ENCODE measurements at regions of chr18 and their contacts with region 1.

Region 1: GRCh38 chr18:47737956-47738355 is 192.5 kb downstream of the SMAD2 start:
- DNase-seq: no peak
- H3K4me3 ChIP-seq: no peak overlapping the region
- H3K27me3 ChIP-seq: 0 out of 2 replicates have a peak, but pooled peaks cover 2% of the 10 kb centered on the region
- CTCF ChIP-seq: no peak

Region 2: GRCh38 chr18:47756364-47757016 is 18.5 kb after region 1 on chr18:
- CTCF ChIA-PET with region 1: interaction called, 12 read pairs
- POLR2A ChIA-PET with region 1: no interaction called
- DNase-seq: no peak
- H3K4me3 ChIP-seq: no peak overlapping the region
- H3K27me3 ChIP-seq: no peaks in the 10 kb centered on the region; the same call in 1 of the 2 replicates
- CTCF ChIP-seq: peak; percentile 97

Measured in BJ (cell line).